Mammary epithelial cell (primary cell): ENCODE measurements at regions of chr18 and their contacts with region 1.

Region 1: GRCh38 chr18:41121116-41121826 is 833.8 kb upstream of the PIK3C3 start:
- DNase-seq: peak; percentile 80
- H3K4me3 ChIP-seq: no peak overlapping the region
- H3K27ac ChIP-seq: peak overlapping the region; percentile 37
- H3K4me1 ChIP-seq: peaks cover 27% of the 10 kb centered on the region
- H3K27me3 ChIP-seq: no peaks in the 10 kb centered on the region
- CTCF ChIP-seq: no peak

Region 2: GRCh38 chr18:41058351-41059125 is 62.7 kb before region 1 on chr18:
- CTCF ChIA-PET with region 1: no interaction called
- dilution Hi-C with region 1: no loop called
- in situ Hi-C with region 1: no loop called
- intact Hi-C with region 1: no loop called
- DNase-seq: no peak
- H3K4me3 ChIP-seq: no peak overlapping the region
- H3K27ac ChIP-seq: no peak overlapping the region
- H3K4me1 ChIP-seq: no peaks in the 10 kb centered on the region
- H3K27me3 ChIP-seq: no peaks in the 10 kb centered on the region
- CTCF ChIP-seq: no peak

Region 3: DNA sequence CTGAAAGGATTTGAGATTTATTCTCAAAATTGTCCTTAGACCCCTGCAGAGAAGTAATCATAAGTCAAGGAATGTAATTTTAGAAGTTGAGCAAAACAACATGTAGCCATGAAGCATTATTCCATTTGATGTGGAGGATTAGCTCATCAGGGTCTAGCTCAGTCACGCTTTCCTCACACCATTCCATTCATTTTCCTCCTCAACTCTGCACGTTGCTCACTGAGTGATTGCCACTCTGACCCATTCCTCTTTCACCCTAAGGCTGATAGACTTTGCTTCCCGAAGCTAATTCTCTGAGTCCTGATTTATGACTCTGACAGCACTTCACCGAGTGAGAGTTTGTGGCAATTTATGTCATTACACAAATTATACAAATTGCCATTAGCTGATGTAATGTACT is 13.2 kb after region 1 on chr18:
- CTCF ChIA-PET with region 1: no interaction called
- dilution Hi-C with region 1: no loop called
- in situ Hi-C with region 1: no loop called
- intact Hi-C with region 1: no loop called
- DNase-seq: no peak
- H3K4me3 ChIP-seq: no peak overlapping the region
- H3K27ac ChIP-seq: no peak overlapping the region
- H3K4me1 ChIP-seq: no peaks in the 10 kb centered on the region
- H3K27me3 ChIP-seq: no peaks in the 10 kb centered on the region
- CTCF ChIP-seq: no peak

Region 4: DNA sequence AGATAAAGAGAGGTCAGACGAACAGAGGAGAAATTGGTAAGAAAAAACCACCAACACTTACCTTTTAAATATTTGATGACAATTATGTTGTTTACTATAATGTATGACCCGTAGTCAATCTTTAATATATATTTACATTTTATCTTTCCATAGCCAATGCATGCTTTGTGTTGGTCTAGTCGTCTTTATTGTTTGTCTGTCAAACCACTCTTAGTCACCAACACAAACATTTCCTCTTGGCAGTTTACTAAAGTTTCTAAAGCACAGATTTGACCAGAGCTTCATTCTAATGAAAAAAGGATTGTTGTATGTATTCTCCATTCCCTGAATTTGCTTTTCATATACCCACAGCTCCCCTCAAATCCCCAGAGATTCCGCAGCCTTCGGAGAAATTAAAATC is 49.1 kb after region 1 on chr18:
- CTCF ChIA-PET with region 1: no interaction called
- dilution Hi-C with region 1: no loop called
- in situ Hi-C with region 1: no loop called
- intact Hi-C with region 1: no loop called
- DNase-seq: no peak
- H3K4me3 ChIP-seq: no peak overlapping the region
- H3K27ac ChIP-seq: no peak overlapping the region
- H3K4me1 ChIP-seq: no peaks in the 10 kb centered on the region
- H3K27me3 ChIP-seq: no peaks in the 10 kb centered on the region
- CTCF ChIP-seq: no peak

Region 5: DNA sequence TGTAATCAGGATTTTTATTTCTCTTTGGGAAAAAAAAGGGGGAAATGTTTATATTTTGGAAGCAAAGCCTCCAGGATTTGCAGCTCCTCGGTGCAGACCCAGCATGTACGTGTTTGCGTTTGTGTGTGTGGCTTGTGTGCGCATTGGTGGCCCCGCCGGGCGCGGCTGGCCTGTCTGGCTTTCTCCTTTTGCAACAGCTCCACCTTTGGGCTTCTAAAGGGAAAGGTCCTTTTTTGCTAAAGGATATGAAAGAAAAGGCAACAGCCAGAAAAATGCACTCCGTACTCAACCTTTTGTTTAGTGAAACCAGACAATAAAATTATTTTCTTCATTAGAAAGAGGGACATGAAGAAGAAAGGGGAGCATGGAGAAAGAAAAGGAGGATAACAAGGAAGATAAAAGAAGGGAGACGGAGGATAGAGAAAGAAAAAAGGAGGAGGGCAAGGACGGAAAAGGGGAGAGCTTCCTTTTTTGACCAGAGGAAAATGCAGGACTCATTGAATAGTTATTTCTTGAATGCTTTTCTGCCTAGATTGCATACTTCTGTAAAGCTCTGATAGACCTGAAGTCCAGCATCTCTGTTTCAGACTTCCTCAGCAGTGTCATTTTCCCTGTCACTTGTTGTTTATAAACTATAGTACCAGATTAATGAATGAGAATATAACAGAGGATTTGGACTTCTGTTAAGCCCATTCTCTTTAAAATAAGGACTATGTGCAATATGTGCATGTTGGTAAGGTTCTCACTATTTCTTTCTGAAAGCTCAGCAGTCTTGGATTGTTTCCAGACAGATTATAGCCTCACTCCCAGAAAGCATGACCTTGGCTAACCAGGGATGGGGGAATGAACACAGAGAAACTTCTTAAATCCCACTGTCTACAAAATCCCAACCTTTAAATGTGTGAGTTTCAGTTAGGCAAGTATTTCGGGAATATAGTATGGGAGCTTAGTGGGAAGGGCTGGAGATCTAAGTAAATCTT is 270.6 kb after region 1 on chr18:
- CTCF ChIA-PET with region 1: no interaction called
- dilution Hi-C with region 1: no loop called
- in situ Hi-C with region 1: loop called in 1 of 2 experiments (anchors 25 kb)
- intact Hi-C with region 1: no loop called
- DNase-seq: peak; percentile 34
- H3K4me3 ChIP-seq: peak overlapping the region; percentile 34 to 61 (median 45)
- H3K27ac ChIP-seq: no peak overlapping the region
- H3K4me1 ChIP-seq: peaks cover 5% of the 10 kb centered on the region
- H3K27me3 ChIP-seq: no peaks in the 10 kb centered on the region
- CTCF ChIP-seq: peak; percentile 61 to 83

Region 6: GRCh38 chr18:41579185-41579584 is 457.9 kb after region 1 on chr18:
- CTCF ChIA-PET with region 1: no interaction called
- dilution Hi-C with region 1: no loop called
- in situ Hi-C with region 1: no loop called
- intact Hi-C with region 1: no loop called
- DNase-seq: no peak
- H3K4me3 ChIP-seq: no peak overlapping the region
- H3K27ac ChIP-seq: no peak overlapping the region
- H3K4me1 ChIP-seq: no peaks in the 10 kb centered on the region
- H3K27me3 ChIP-seq: peaks cover 3% of the 10 kb centered on the region
- CTCF ChIP-seq: no peak